HepG2 (cell line): ENCODE measurements at regions of chr11 and their contacts with region 1.

Region 1: DNA sequence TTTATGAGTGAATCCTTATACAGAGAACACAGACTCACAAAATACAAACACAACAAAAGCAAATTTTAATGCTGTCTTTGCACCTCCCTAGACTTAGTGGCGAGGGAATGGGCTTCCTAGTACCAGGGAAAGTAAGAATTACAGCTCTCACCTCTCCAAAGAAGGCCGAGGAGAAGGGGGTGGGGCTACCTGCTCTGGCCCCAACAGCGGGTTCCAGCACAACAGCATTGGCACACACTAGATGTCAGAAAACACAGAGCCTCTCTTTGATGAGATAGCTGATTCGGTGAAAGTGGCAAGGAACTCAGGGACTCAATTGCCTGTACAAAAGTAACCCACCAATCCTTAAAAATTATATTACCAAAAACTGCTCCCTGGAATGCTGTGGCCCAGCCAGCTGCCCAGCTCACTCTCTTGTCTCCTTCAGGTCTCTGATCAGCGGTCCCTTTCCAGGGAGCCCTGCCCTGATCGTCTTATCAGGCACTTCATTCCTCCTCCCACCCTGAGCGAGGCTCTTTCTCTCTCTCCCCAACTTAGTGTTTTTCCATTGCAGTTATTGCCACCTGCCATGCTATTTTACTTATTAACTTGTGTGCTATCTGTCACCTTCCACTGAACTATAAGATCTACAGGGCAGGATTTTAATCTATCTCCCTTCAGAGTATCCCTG is 30.7 kb downstream of the SPON1 start:
- DNase-seq: no peak
- ATAC-seq: no peak
- H3K4me3 ChIP-seq: no peak overlapping the region
- H3K27ac ChIP-seq: no peak overlapping the region
- H3K4me1 ChIP-seq: no peaks in the 10 kb centered on the region
- H3K27me3 ChIP-seq: no peaks in the 10 kb centered on the region
- CTCF ChIP-seq: no peak
- EP300 ChIP-seq: no peak
- POLR2A ChIP-seq: no peak
- RAD21 ChIP-seq: no peak

Region 2: DNA sequence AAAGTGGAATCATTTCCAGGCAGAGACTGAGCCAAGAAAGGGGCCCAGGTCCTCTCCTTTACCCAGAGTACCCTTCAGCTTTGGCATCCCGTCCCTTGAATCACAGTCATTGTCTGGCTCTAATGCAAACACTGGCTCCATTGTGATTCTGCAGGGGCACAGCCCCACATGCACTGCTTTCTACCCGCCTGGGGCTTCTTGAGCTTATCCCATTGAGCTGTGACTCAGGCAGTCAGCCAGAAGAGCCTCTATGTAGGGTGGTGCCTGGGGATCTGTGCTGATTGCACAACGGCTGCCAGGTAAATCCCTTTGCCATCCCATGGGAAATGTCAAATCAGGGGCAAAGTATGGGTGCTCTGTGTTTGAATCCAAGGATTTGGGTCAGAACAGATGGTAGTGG is 895.2 kb before region 1 on chr11:
- CTCF ChIA-PET with region 1: no interaction called
- POLR2A ChIA-PET with region 1: no interaction called
- in situ Hi-C with region 1: no loop called
- intact Hi-C with region 1: no loop called
- DNase-seq: peak; percentile 42
- ATAC-seq: peak; percentile 55; the same call in 2 of the 3 replicates
- H3K4me3 ChIP-seq: no peak overlapping the region
- H3K27ac ChIP-seq: no peak overlapping the region
- H3K4me1 ChIP-seq: peaks cover 23% of the 10 kb centered on the region; the same call in 1 of the 2 replicates
- H3K27me3 ChIP-seq: no peaks in the 10 kb centered on the region; a peak in 1 of 5 replicates
- CTCF ChIP-seq: no peak
- EP300 ChIP-seq: no peak
- POLR2A ChIP-seq: no peak
- RAD21 ChIP-seq: no peak

Region 3: DNA sequence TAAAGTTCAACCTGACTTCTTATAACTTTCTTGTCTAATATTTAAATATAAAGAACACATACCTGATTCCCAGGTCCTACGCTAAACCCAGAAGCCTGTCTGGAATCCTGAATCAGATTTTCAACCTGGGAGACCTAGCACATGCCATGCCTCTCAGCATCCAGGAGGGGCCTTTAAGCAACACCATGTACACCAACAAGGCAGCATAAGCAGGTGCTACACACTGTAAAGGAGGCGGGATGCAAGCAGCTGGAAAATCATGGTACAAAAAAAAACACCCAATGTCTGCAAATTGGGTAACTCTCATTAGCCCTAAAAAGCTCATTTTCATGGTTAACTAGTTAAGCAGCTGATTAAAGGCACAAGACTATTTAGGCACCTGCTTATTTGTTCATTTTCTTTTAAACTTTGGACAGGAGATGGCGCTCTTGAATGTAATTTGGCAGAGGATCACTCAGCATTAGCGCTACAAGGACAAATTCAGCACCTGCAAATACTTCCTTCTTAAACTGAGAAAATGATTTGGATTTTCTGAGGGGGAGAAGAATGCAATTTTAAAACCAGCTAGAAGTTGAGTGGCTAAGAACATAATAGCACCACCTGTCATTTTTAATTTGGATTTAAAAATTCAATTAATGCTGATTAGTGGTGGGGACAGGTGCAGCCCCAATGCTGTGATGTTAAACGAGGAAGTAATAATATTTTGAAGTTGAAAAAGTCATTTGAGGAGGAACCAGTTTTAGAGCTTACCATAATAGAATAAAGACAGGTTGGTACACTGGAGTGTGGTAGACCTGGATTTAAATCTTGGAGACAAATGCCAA is 220.8 kb before region 1 on chr11:
- CTCF ChIA-PET with region 1: no interaction called
- POLR2A ChIA-PET with region 1: no interaction called
- in situ Hi-C with region 1: no loop called
- intact Hi-C with region 1: loop called (anchors 5 kb)
- DNase-seq: peak; percentile 58
- ATAC-seq: peak; percentile 77
- H3K4me3 ChIP-seq: no peak overlapping the region
- H3K27ac ChIP-seq: no peak overlapping the region
- H3K4me1 ChIP-seq: no peaks in the 10 kb centered on the region
- H3K27me3 ChIP-seq: no peaks in the 10 kb centered on the region
- CTCF ChIP-seq: peak; percentile 59
- EP300 ChIP-seq: no peak
- POLR2A ChIP-seq: no peak
- RAD21 ChIP-seq: peak; percentile 38; the same call in 1 of the 2 replicates

Region 4: DNA sequence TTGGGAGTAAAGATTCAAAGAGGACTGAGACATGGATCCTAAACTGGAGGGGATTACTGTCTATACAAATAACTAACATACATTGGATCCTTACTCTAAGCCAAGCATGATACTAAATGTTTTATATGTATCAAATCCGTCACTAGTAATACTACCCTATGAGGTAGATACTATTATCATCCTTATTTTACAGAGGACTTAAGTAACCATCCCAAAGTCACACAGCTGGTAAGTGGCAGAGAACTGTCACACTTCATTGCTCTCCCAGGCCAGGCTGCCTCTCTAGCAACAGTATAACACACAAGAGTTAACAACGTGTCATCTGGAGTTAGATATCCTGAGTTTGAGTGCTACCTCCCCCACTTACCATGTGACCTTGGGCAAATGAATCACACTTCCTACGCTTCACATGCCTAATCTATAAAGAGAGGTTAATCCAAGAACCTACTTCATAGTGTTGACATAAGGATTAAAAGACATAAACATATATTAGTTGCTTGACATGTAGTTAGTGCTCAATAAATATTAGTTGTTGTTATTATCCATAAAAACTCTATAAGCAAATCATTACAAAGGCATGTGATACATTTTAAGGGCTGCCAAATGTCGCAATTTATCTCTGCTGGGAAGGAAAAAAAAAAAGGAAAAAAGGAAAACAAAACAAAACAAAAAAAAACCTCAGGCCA is 64.5 kb before region 1 on chr11:
- CTCF ChIA-PET with region 1: no interaction called
- POLR2A ChIA-PET with region 1: no interaction called
- in situ Hi-C with region 1: no loop called
- intact Hi-C with region 1: no loop called
- DNase-seq: no peak
- ATAC-seq: no peak
- H3K4me3 ChIP-seq: no peak overlapping the region
- H3K27ac ChIP-seq: no peak overlapping the region
- H3K4me1 ChIP-seq: no peaks in the 10 kb centered on the region
- H3K27me3 ChIP-seq: no peaks in the 10 kb centered on the region; a peak in 1 of 5 replicates
- CTCF ChIP-seq: no peak
- EP300 ChIP-seq: no peak
- POLR2A ChIP-seq: no peak
- RAD21 ChIP-seq: no peak

Region 5: DNA sequence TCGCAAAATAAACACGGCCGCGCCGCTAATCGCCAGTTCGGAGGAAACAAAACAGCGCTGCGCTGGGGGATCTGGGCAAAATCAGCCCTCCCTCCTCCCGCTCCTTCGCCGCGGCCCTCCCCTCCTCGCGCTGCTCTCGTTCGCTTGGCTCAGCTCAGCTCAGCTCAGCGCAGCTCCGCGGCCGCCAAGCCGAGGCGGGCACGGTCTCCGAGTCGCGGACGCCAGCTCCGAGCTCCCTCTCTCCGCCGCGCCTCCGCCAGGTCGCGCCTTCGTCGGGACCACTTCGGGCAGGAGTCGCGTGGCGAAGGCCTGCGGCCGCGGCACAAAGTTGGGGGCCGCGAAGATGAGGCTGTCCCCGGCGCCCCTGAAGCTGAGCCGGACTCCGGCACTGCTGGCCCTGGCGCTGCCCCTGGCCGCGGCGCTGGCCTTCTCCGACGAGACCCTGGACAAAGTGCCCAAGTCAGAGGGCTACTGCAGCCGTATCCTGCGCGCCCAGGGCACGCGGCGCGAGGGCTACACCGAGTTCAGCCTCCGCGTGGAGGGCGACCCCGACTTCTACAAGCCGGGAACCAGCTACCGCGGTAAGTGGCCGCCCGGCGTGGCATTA is 30.6 kb before region 1 on chr11 and contains the start of gene SPON1:
- CTCF ChIA-PET with region 1: no interaction called
- POLR2A ChIA-PET with region 1: no interaction called
- in situ Hi-C with region 1: no loop called
- intact Hi-C with region 1: no loop called
- DNase-seq: no peak
- ATAC-seq: no peak
- H3K4me3 ChIP-seq: no peak within 1 kb of the TSS
- H3K27ac ChIP-seq: no peak within 1 kb of the TSS
- H3K4me1 ChIP-seq: peaks cover 11% of the 10 kb centered on the region
- H3K27me3 ChIP-seq: peaks cover 2 to 27% of the 10 kb centered on the region in 2 experiments
- CTCF ChIP-seq: no peak
- EP300 ChIP-seq: no peak
- POLR2A ChIP-seq: no peak
- RAD21 ChIP-seq: no peak
- total RNA-seq, gene SPON1: not detected in 2 replicates